Activated naive CD4-positive, alpha-beta T cell treated with anti-CD3 and anti-CD28 coated beads, Interleukin-2, amount 10 ng/mL, durations not matched to agents 7 days and 5 days (primary cell): ENCODE measurements at regions of chr1 and their contacts with region 1.

Region 1: GRCh38 chr1:186272486-186272885 is 102.6 kb downstream of the TPR start:
- DNase-seq: no peak
- H3K4me3 Mint-ChIP-seq: no peak overlapping the region
- H3K27ac Mint-ChIP-seq: no peak overlapping the region
- H3K4me1 Mint-ChIP-seq: peaks cover 17% of the 10 kb centered on the region
- H3K27me3 Mint-ChIP-seq: peaks cover 4% of the 10 kb centered on the region

Region 2: GRCh38 chr1:186325239-186325638 is 52.8 kb after region 1 on chr1:
- CTCF ChIA-PET with region 1: interaction called, 37 read pairs
- DNase-seq: no peak
- H3K4me3 Mint-ChIP-seq: no peak overlapping the region
- H3K27ac Mint-ChIP-seq: peak overlapping the region; percentile 38
- H3K4me1 Mint-ChIP-seq: peaks cover 38% of the 10 kb centered on the region
- H3K27me3 Mint-ChIP-seq: no peaks in the 10 kb centered on the region

Region 3: GRCh38 chr1:186494832-186495271 is 222.4 kb after region 1 on chr1:
- CTCF ChIA-PET with region 1: no interaction called
- DNase-seq: no peak
- H3K4me3 Mint-ChIP-seq: no peak overlapping the region
- H3K27ac Mint-ChIP-seq: no peak overlapping the region
- H3K4me1 Mint-ChIP-seq: no peaks in the 10 kb centered on the region
- H3K27me3 Mint-ChIP-seq: no peaks in the 10 kb centered on the region